WTC11 (cell line): ENCODE measurements at regions of chr20 and their contacts with region 1.

Region 1: DNA sequence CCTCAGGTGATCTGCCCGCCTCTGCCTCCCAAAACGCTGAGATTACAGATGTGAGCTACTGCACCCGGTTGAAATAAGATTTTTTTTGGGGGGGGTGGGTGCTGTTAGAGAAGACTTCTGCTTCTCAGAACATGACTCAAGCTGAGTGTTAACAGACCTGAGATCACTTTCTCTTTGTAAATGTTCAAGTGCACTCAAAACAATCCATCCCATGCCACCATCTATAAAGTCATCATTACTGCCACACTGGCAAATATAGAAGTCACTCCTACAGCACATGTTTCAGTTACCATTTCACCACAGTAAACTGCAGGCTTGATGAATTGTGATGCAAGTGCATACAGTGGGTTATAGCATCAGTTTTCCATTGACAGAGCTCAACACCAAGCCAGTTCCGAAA is 9.0 kb downstream of the VPS16 start:
- DNase-seq: no peak
- ATAC-seq: no peak
- H3K4me3 Mint-ChIP-seq: no peak overlapping the region
- H3K27ac Mint-ChIP-seq: no peak overlapping the region
- H3K4me1 Mint-ChIP-seq: peaks cover 4% of the 10 kb centered on the region
- H3K27me3 Mint-ChIP-seq: no peaks in the 10 kb centered on the region
- CTCF ChIP-seq: no peak

Region 2: DNA sequence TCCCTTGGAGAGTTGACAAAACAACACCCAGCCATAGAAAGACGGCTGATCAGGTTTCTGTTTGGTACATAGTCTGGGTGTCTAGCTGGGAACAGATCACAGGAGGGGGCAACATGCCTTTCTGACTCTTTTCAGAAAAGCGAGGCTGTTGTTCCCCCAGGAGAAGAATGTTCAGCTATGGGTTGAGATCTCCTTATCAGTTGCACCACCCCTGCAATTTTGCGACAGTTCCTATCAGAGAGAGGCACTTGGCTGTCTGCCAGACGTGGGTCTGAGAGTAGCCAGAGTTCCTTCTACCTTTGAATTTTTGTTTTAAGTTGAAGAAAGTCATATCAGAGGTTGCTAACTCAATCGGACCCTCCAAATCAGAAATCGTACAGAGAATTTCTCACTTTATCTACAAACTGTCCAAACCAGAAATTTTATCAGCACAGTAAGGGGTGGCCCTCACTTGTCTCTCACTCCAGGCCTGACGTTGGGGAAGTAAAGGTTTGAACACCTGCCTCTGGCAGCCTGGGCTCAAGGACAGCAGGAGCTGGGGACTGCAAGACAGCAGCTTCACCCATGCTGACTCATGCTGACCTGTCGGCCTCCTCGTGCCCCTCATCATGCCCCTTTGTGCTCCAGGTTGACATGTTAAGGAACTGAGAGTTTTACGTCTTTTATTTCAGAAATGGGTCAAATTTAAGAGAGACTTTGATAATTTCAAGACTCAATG is 270.9 kb before region 1 on chr20:
- CTCF ChIA-PET with region 1: no interaction called
- POLR2A ChIA-PET with region 1: no interaction called
- DNase-seq: no peak
- ATAC-seq: no peak
- H3K4me3 Mint-ChIP-seq: no peak overlapping the region
- H3K27ac Mint-ChIP-seq: no peak overlapping the region
- H3K4me1 Mint-ChIP-seq: no peaks in the 10 kb centered on the region
- H3K27me3 Mint-ChIP-seq: no peaks in the 10 kb centered on the region; the same call in 1 of the 2 replicates
- CTCF ChIP-seq: no peak

Region 3: DNA sequence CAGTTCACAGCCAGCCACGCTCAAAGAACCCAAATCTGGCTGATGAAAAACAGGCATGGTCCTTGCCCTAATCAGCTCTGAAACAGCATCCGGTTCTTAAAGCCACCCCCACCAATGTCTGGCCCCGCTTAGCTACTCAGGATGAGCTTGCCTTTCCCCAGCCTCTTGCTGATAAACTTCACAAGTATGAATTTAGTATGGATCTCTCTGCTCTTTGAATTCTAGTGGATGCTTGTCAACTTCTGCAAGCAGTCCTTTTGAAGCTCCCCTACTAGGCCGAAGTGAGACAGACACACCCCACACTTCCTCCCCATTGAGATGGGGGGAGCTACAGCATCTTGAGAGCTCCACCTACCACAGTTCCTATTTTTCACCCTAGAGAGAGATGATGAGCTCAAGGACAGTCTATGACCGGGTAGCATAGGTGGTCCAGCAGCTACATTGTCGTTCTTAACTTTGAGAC is 120.2 kb before region 1 on chr20:
- CTCF ChIA-PET with region 1: no interaction called
- POLR2A ChIA-PET with region 1: no interaction called
- DNase-seq: no peak
- ATAC-seq: peak; percentile 57
- H3K4me3 Mint-ChIP-seq: no peak overlapping the region
- H3K27ac Mint-ChIP-seq: no peak overlapping the region
- H3K4me1 Mint-ChIP-seq: peaks cover 5% of the 10 kb centered on the region
- H3K27me3 Mint-ChIP-seq: peaks cover 46% of the 10 kb centered on the region
- CTCF ChIP-seq: no peak

Region 4: DNA sequence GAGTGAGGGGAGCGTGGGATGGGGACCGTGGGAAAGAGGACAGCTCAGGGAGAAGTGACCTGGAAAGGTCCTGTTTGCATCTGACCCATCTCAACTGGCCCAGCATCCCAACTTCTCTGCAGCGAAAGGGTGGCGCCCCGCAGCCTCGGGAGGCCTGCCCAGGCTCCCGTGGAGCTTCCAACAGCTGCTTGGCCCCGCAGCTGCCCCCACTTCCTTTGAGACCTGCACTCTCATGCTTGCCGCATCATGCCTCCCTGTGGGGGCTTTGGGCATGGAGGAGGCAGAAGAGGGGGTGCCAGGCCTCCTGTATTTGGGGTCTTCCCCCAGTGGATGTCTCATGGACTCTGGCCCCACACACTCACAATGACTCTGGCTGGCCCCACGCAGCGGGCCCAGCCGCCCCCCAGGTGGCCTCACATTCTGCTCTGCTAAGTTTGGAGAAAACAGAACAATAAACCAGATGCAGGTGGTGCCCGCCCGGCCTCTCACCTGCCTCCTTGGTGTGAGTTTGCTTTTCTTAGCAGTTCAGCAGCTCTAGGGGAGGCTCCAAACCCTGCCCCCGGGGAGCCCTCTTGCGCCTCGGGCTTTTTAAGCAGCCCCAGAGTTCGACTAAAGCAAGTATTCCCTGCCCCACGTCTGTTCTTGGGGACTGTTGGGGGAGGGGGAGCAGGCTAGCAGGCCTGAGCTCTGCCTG is 89.8 kb before region 1 on chr20:
- CTCF ChIA-PET with region 1: interaction called, 64 read pairs
- POLR2A ChIA-PET with region 1: interaction called, 3 read pairs
- DNase-seq: no peak
- ATAC-seq: no peak
- H3K4me3 Mint-ChIP-seq: no peak overlapping the region
- H3K27ac Mint-ChIP-seq: no peak overlapping the region
- H3K4me1 Mint-ChIP-seq: peaks cover 17% of the 10 kb centered on the region
- H3K27me3 Mint-ChIP-seq: peaks cover 11% of the 10 kb centered on the region
- CTCF ChIP-seq: no peak

Region 5: GRCh38 chr20:2800521-2801285 is 48.8 kb before region 1 on chr20 and contains the start of gene CPXM1:
- CTCF ChIA-PET with region 1: interaction called, 12 read pairs
- POLR2A ChIA-PET with region 1: no interaction called
- DNase-seq: peak; percentile 77
- ATAC-seq: peak; percentile 78
- H3K4me3 Mint-ChIP-seq: peak within 1 kb of the TSS; percentile 95
- H3K27ac Mint-ChIP-seq: peak within 1 kb of the TSS; percentile 75
- H3K4me1 Mint-ChIP-seq: peaks cover 31% of the 10 kb centered on the region
- H3K27me3 Mint-ChIP-seq: peaks cover 57% of the 10 kb centered on the region
- CTCF ChIP-seq: no peak
- total RNA-seq, gene CPXM1: 51.2 to 57.1 TPM (median 54.6 TPM) in 3 replicates

Region 6: DNA sequence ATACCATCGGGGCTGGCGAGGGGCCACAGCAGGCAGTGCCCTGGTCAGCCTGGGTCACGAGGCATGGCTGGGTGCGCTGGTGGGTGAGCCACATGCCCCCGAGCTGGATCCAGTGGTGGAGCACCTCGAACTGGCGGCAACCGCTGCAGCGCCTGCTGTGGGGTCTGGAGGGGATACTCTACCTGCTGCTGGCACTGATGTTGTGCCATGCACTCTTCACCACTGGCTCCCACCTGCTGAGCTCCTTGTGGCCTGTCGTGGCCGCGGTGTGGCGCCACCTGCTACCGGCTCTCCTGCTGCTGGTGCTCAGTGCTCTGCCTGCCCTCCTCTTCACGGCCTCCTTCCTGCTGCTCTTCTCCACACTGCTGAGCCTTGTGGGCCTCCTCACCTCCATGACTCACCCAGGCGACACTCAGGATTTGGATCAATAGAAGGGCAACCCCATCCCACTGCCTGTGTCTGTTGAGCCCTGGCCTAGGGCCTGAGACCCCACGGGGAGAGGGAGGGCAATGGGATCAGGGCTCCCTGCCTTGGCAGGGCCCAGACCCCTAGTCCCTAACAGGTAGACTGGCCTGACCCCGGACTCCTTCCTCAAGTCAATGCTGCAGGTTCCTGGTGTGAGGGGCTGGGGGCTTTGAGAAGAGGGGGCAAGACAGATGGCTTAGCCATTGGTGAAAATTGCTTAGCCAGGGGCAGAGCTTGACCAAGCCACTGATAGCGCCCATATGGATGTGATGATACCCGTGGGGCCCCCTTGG is 32.8 kb before region 1 on chr20:
- CTCF ChIA-PET with region 1: interaction called, 16 read pairs
- POLR2A ChIA-PET with region 1: no interaction called
- DNase-seq: peak; percentile 56
- ATAC-seq: peak; percentile 18
- H3K4me3 Mint-ChIP-seq: no peak overlapping the region
- H3K27ac Mint-ChIP-seq: no peak overlapping the region
- H3K4me1 Mint-ChIP-seq: peaks cover 14% of the 10 kb centered on the region
- H3K27me3 Mint-ChIP-seq: peaks cover 60% of the 10 kb centered on the region
- CTCF ChIP-seq: peak; percentile 31; the same call in 1 of the 2 replicates

Region 7: DNA sequence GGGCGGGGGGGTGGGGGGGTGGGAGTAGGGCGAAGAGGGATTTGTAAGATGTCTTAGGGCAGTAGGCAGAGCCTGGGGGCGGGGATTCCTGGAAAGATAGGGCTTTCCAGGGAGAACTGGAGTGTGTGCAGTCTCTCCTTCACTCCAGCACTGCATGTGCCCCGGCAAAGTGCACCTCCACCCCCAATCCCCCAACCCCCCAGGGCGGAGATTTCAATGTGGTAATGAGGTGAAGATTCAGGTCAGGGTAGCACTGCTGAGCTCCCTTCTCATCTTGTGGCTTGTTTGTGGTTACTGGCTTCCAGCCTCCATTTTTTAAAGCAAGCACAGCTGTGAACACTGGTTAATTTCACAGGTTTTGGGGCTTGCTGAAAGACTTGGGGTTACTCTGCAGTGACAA is 27.5 kb before region 1 on chr20:
- CTCF ChIA-PET with region 1: interaction called, 16 read pairs
- POLR2A ChIA-PET with region 1: no interaction called
- DNase-seq: no peak
- ATAC-seq: no peak
- H3K4me3 Mint-ChIP-seq: no peak overlapping the region
- H3K27ac Mint-ChIP-seq: no peak overlapping the region
- H3K4me1 Mint-ChIP-seq: peaks cover 15% of the 10 kb centered on the region
- H3K27me3 Mint-ChIP-seq: peaks cover 65% of the 10 kb centered on the region
- CTCF ChIP-seq: no peak

Region 8: DNA sequence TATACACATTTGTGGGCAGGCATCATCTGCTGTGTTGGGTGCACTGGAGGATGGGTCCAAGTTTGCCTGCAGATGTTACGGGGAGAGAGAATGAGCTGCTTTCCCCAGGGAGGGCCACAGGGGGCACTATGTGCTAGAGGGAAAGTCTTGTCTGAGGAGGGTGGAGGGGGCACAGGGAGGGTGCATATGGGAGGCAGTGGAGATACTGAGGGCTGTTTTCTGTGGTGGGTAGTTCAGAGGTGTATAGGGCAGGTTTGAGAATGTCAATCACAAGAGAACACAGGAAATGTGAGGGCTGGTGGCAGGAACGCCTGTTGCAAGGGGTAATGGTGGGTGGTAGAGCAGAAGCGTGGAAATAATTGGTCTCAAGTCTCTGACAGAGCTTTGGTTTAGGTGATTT is 16.1 kb after region 1 on chr20:
- CTCF ChIA-PET with region 1: interaction called, 11 read pairs
- POLR2A ChIA-PET with region 1: no interaction called
- DNase-seq: peak; percentile 42
- ATAC-seq: peak; percentile 78
- H3K4me3 Mint-ChIP-seq: no peak overlapping the region
- H3K27ac Mint-ChIP-seq: no peak overlapping the region
- H3K4me1 Mint-ChIP-seq: no peaks in the 10 kb centered on the region
- H3K27me3 Mint-ChIP-seq: peaks cover 3% of the 10 kb centered on the region; the same call in 1 of the 2 replicates
- CTCF ChIP-seq: no peak